PC-9 (cell line): ENCODE measurements at regions of chr4 and their contacts with region 1.

Region 1: DNA sequence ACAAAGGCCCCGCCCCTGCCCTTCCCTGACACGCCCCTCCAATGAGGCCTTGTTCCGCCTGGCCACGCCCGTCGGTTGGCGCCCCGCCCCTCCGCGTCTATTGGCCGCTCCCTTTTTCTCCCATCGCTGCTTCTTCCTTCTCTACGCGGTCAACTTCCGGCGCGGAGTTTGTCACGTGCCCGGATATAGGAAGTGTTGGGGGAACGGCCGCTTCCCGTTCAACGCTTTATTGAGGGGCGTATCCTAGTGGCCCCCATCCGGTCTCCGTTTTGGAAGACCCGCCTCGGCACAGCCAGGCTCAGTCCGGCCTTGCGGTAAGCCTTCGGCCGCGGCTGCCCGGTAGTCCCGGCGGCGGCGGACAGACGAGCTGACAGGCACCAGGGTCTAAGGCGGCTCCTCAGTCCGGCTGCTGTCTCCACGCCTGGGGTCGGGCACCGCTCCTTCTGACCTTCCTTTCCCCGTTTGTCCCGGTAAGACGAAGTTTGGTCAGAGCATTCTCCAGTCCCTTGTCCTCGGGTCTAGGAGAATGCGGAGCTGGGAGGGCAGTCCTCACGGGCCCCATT is at the start of gene EXOC1:
- DNase-seq: peak; percentile 86 to 93
- H3K4me3 ChIP-seq: peak within 1 kb of the TSS; percentile 91
- H3K27ac ChIP-seq: peak within 1 kb of the TSS; percentile 45
- H3K4me1 ChIP-seq: peaks cover 34% of the 10 kb centered on the region
- H3K27me3 ChIP-seq: no peaks in the 10 kb centered on the region
- CTCF ChIP-seq: no peak
- total RNA-seq, gene EXOC1: 23.1 and 27.1 TPM in 2 replicates

Region 2: DNA sequence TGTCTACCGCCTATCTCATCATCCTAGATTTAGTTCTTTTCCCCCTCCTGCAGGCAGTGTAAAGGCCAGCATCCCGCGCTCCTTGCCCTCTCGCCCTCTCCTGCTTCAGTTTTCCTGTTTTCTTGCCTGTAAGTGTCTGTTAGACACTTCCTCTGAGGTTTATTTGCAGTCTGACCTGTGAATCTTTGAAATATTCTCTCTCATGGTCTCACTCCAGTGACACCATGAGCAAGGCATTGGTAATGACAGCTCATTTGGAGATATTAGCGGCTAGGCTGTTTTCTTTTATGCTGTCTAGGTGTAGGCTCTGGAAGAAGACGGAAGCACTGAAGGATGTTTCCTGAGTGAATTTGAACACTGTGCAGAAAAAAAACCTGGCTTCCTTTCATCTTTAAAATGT is 907.7 kb before region 1 on chr4:
- CTCF ChIA-PET with region 1: no interaction called
- POLR2A ChIA-PET with region 1: no interaction called
- intact Hi-C with region 1: no loop called
- DNase-seq: no peak
- H3K4me3 ChIP-seq: no peak overlapping the region
- H3K27ac ChIP-seq: no peak overlapping the region
- H3K4me1 ChIP-seq: no peaks in the 10 kb centered on the region
- H3K27me3 ChIP-seq: no peaks in the 10 kb centered on the region
- CTCF ChIP-seq: no peak

Region 3: GRCh38 chr4:55757356-55758024 is 96.1 kb before region 1 on chr4:
- CTCF ChIA-PET with region 1: no interaction called
- POLR2A ChIA-PET with region 1: interaction called, 10 read pairs
- intact Hi-C with region 1: no loop called
- DNase-seq: no peak
- H3K4me3 ChIP-seq: no peak overlapping the region
- H3K27ac ChIP-seq: no peak overlapping the region
- H3K4me1 ChIP-seq: peaks cover 26% of the 10 kb centered on the region
- H3K27me3 ChIP-seq: no peaks in the 10 kb centered on the region
- CTCF ChIP-seq: no peak

Region 4: DNA sequence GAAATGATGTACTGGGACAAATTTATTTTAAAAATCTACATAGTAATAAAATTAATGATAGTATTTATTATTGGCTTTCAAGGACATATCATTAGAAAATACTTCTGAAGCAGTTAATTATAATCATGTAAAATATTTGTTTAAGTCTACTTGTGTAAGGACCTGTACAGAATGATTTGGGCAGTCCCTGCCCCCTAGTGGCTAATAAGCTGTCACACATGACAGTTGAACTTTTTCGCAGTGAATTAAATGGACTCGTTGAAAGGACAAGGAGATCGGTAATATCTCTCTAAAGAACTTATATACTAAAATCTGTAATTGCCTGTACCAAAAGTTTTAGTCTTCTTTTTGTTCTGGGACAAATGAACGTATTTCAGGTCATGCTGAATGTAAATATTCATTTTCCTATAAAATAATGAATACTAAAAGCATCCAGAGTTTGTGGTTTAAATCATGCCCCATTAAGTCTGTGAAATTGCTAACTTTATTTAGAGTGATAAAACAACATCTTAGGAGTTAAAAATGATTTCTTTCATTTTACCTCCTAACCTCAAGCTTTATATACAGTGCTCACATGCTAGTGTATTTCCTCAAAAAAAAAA is 13.5 kb after region 1 on chr4:
- CTCF ChIA-PET with region 1: no interaction called
- POLR2A ChIA-PET with region 1: no interaction called
- intact Hi-C with region 1: no loop called
- DNase-seq: peak in 1 of 2 experiments; percentile 59
- H3K4me3 ChIP-seq: no peak overlapping the region
- H3K27ac ChIP-seq: peak overlapping the region; percentile 76
- H3K4me1 ChIP-seq: peaks cover 27% of the 10 kb centered on the region
- H3K27me3 ChIP-seq: no peaks in the 10 kb centered on the region
- CTCF ChIP-seq: peak; percentile 80